PC-3 (cell line): ENCODE measurements at regions of chr19 and their contacts with region 1.

Region 1: DNA sequence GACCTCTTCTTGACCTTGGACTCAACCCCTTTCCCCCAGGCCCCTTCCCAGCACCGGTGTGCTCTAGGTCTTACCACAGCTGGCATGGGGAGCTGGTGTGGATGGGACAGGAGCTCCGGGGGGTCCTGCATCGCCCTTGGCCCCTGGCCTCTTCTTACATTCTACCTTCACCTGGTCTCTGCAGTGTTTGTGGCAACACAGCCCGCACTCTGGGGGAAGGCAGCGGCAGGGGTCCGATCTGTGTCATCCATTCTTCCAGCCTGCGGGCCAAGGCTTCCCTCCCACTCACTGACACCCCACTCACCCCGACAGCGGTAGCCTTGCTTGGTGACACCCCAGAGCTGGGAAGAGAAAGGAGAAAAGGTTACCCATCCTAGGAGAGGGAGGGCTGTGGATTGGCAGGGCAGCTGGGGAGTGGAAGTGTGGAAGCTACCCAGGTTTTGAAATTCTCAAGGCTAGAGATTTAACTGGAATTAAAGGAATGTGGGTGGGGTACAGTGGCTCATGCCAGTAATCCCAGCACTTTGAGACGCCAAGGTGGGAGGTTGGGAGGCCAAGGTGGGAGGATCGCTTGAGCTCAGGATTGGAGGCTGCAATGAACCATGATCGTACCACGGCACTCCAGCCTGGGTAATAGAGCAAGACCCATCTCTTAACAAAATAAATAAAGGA is 8.3 kb downstream of the FAM98C start:
- DNase-seq: no peak
- ATAC-seq: no peak; the same call in 1 of the 2 replicates
- H3K4me3 ChIP-seq: no peak overlapping the region
- H3K27ac ChIP-seq: no peak overlapping the region
- H3K4me1 ChIP-seq: no peaks in the 10 kb centered on the region
- H3K27me3 ChIP-seq: no peaks in the 10 kb centered on the region
- CTCF ChIP-seq: no peak

Region 2: GRCh38 chr19:38062959-38063761 is 348.0 kb before region 1 on chr19:
- CTCF ChIA-PET with region 1: no interaction called
- POLR2A ChIA-PET with region 1: interaction called, 10 read pairs
- intact Hi-C with region 1: no loop called
- DNase-seq: no peak
- ATAC-seq: no peak
- H3K4me3 ChIP-seq: no peak overlapping the region
- H3K27ac ChIP-seq: no peak overlapping the region
- H3K4me1 ChIP-seq: peaks cover 29% of the 10 kb centered on the region
- H3K27me3 ChIP-seq: no peaks in the 10 kb centered on the region
- CTCF ChIP-seq: no peak